Activated T-helper 2 cell treated with anti-CD3 and anti-CD28 coated beads, Interferon-gamma antibody, Interleukin-2, Interleukin-4, amounts not matched to agents 10 μg/mL and 5 μg/mL and 100 μg/mL, durations not matched to agents 14 hours and 24 hours and 36 hours (primary cell): ENCODE measurements at regions of chr11 and their contacts with region 1.

Region 1: GRCh38 chr11:14300661-14301304 is 58.2 kb downstream of the RRAS2 start:
- DNase-seq: peak; percentile 31
- H3K4me3 Mint-ChIP-seq: no peak overlapping the region
- H3K27ac Mint-ChIP-seq: no peak overlapping the region
- H3K4me1 Mint-ChIP-seq: peaks cover 6% of the 10 kb centered on the region
- H3K27me3 Mint-ChIP-seq: no peaks in the 10 kb centered on the region

Region 2: GRCh38 chr11:14288189-14288935 is 12.4 kb before region 1 on chr11:
- intact Hi-C with region 1: no loop called
- DNase-seq: no peak
- H3K4me3 Mint-ChIP-seq: peak overlapping the region; percentile 14
- H3K27ac Mint-ChIP-seq: peak overlapping the region; percentile 72
- H3K4me1 Mint-ChIP-seq: peaks cover 30% of the 10 kb centered on the region
- H3K27me3 Mint-ChIP-seq: no peaks in the 10 kb centered on the region

Region 3: GRCh38 chr11:14373931-14374646 is 73.3 kb after region 1 on chr11:
- intact Hi-C with region 1: loop called (anchors 5 kb)
- DNase-seq: no peak
- H3K4me3 Mint-ChIP-seq: no peak overlapping the region
- H3K27ac Mint-ChIP-seq: peak overlapping the region; percentile 78
- H3K4me1 Mint-ChIP-seq: peaks cover 63% of the 10 kb centered on the region
- H3K27me3 Mint-ChIP-seq: peaks cover 5% of the 10 kb centered on the region

Region 4: GRCh38 chr11:14454861-14455632 is 154.3 kb after region 1 on chr11:
- intact Hi-C with region 1: loop called (anchors 2 kb)
- DNase-seq: no peak
- H3K4me3 Mint-ChIP-seq: no peak overlapping the region
- H3K27ac Mint-ChIP-seq: no peak overlapping the region
- H3K4me1 Mint-ChIP-seq: no peaks in the 10 kb centered on the region
- H3K27me3 Mint-ChIP-seq: no peaks in the 10 kb centered on the region